A549 (cell line): ENCODE measurements at regions of chr15 and their contacts with region 1.

Region 1: DNA sequence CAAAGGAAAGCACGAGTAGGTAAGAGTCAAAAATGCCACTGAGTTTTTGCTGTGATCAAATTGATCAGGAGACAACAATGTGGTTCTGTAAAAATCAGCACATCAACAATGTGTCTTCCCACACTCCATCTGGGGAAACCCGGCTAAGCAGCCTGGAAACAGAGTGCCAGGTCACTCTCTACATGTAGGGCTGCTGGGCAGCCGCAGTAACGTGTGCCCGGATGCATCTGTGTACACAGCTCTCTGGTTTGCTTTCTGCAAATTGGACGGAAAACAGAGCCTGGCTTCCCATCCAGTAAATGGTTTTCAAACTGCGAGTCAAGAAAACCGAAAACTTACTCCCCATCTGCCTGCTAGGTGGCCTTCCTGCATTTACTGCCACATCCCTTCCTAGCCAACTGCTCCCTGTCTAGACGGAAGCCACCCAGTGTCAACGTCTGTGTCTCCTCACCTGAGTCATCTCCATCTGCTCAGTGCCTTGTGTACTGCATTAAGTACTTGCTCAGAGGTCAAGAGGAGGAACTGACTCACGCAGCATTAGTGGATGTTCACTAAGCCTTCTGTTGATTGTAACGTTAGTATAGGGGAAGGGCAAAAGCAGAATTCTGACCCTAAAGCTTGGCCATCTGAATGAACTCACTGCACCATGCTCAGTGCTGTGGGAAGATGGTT is 124.1 kb downstream of the TJP1 start:
- DNase-seq: peak; percentile 86 to 96
- ATAC-seq: peak; percentile 92 to 95
- H3K4me3 ChIP-seq: no peak overlapping the region
- H3K27ac ChIP-seq: peak overlapping the region; percentile 76 to 88
- H3K4me1 ChIP-seq: peaks cover 78% of the 10 kb centered on the region
- CTCF ChIP-seq: no peak
- EP300 ChIP-seq: peak; percentile 68 to 79; a peak in 3 of 5 replicates
- POLR2A ChIP-seq: no peak
- RAD21 ChIP-seq: peak; percentile 17 to 42; a peak in 3 of 5 replicates

Region 2: GRCh38 chr15:29740692-29741311 is 42.6 kb after region 1 on chr15:
- CTCF ChIA-PET with region 1: interaction called, 11 read pairs
- POLR2A ChIA-PET with region 1: interaction called, 10 read pairs
- DNase-seq: peak in 1 of 2 experiments; percentile 61
- ATAC-seq: peak; percentile 47 to 60; a peak in 3 of 6 replicates
- H3K4me3 ChIP-seq: no peak overlapping the region
- H3K27ac ChIP-seq: peak overlapping the region; percentile 22 to 86; a peak in 4 of 6 replicates
- H3K4me1 ChIP-seq: peaks cover 39% of the 10 kb centered on the region
- CTCF ChIP-seq: peak; percentile 83
- EP300 ChIP-seq: no peak
- POLR2A ChIP-seq: no peak
- RAD21 ChIP-seq: peak; percentile 86 to 88

Region 3: DNA sequence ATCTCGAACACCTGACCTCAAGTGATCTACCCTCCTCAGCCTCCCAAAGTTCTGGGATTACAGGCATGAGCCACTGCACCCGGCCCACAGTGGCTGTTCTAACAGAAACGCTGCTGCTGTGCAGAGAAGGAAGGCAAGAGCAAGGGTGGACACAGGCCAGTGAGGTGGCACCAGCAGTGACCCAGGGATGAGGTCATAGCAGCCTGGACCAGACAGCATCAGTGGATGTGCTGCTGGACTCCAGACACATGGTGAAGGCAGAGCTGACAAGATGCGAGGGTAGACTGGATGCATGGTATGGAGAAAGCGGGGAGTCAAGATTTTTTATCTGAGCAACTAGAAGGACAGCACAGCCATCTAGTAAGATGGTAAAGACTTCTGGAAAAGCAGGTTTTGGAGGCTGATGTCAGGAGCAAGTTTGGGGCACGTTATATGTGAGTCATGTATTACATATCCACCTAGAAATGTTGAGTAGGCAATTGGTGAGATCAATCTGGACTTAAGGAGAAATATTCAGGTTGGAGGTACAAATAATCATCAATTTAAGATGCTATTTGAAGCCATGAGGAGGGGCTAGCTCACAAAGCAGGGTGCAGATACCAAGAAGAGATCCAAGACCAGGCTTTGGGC is 146.2 kb after region 1 on chr15:
- CTCF ChIA-PET with region 1: no interaction called
- POLR2A ChIA-PET with region 1: no interaction called
- DNase-seq: no peak
- ATAC-seq: peak in 1 of 2 experiments; percentile 34; a peak in 2 of 6 replicates
- H3K4me3 ChIP-seq: no peak overlapping the region
- H3K27ac ChIP-seq: peak overlapping the region; percentile 55 to 70; a peak in 5 of 6 replicates
- H3K4me1 ChIP-seq: peaks cover 17% of the 10 kb centered on the region
- CTCF ChIP-seq: no peak
- EP300 ChIP-seq: no peak
- POLR2A ChIP-seq: no peak
- RAD21 ChIP-seq: no peak